Activated naive CD4-positive, alpha-beta T cell treated with anti-CD3 and anti-CD28 coated beads for 36 hours (primary cell): ENCODE measurements at regions of chr1 and their contacts with region 1.

Region 1: DNA sequence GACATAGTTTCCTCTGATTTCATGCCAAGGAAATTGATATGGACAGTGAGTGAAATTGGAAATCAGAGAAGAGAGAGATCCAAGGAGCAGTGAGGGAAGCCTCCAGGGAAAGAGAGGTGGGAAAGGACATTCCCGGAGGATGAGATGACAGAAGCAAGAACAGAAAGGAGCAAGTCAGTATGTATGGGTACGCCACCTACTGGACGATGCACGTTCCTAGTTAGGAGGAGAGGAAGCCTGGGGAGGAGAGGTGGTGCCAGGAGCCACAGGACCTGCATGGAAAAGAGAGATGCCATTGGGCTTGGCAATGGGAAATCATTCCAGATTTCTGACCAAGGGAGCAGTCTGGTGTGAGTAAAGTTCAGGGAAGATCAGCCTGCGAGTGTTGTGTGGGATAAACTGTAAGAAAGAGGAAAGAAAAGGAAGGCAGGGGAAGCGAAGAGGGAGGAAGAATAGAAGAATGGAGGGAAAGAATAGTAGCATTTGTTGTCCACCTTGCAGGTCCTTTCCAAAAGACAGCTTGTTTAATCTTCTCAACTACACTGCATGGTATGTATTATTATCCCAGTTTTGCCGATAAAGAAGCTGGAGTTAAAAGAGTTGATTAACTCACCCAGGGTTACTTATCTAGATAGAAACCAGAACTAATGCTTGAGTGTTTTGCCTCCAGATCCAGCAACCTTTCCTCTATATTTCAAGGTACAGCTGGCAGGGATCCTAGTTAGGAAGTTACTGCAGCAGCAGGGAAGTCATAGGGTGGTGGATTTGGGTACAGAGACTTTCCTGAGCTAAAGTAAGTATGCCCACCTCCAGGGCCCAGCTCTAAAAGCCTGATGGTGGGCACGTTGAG is 27.4 kb downstream of the C1orf116 start:
- DNase-seq: peak; percentile 62
- H3K4me3 Mint-ChIP-seq: no peak overlapping the region
- H3K27ac Mint-ChIP-seq: no peak overlapping the region
- H3K4me1 Mint-ChIP-seq: peaks cover 2% of the 10 kb centered on the region
- H3K27me3 Mint-ChIP-seq: peaks cover 2% of the 10 kb centered on the region

Region 2: DNA sequence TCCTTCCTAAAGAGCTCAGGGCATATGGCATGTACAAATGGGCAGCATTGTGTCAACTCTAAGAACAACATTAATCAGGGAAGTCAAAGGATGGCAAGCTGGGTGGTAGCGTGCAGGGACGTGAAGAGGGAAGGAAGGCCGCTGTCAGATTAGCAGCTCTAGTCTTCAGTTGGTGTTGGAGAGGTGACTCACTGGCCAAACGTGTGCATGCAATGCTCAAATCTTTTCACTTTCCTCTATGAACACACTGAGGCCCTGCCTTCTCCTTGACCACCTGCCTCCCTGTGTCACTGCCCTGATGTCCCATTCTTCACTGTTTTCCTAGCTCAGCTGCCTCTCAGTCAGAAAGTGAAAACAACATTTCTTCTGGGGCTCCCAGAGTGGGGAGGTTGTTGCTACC is 53.0 kb before region 1 on chr1:
- CTCF ChIA-PET with region 1: interaction called, 11 read pairs
- intact Hi-C with region 1: no loop called
- DNase-seq: no peak
- H3K4me3 Mint-ChIP-seq: no peak overlapping the region
- H3K27ac Mint-ChIP-seq: no peak overlapping the region
- H3K4me1 Mint-ChIP-seq: peaks cover 13% of the 10 kb centered on the region
- H3K27me3 Mint-ChIP-seq: no peaks in the 10 kb centered on the region

Region 3: GRCh38 chr1:206971029-206971655 is 34.1 kb before region 1 on chr1:
- CTCF ChIA-PET with region 1: interaction called, 14 read pairs
- intact Hi-C with region 1: no loop called
- DNase-seq: no peak
- H3K4me3 Mint-ChIP-seq: no peak overlapping the region
- H3K27ac Mint-ChIP-seq: no peak overlapping the region
- H3K4me1 Mint-ChIP-seq: peaks cover 18% of the 10 kb centered on the region
- H3K27me3 Mint-ChIP-seq: no peaks in the 10 kb centered on the region

Region 4: GRCh38 chr1:206992790-206993189 is 12.4 kb before region 1 on chr1:
- CTCF ChIA-PET with region 1: interaction called, 23 read pairs
- intact Hi-C with region 1: no loop called
- DNase-seq: no peak
- H3K4me3 Mint-ChIP-seq: no peak overlapping the region
- H3K27ac Mint-ChIP-seq: no peak overlapping the region
- H3K4me1 Mint-ChIP-seq: no peaks in the 10 kb centered on the region
- H3K27me3 Mint-ChIP-seq: peaks cover 4% of the 10 kb centered on the region

Region 5: DNA sequence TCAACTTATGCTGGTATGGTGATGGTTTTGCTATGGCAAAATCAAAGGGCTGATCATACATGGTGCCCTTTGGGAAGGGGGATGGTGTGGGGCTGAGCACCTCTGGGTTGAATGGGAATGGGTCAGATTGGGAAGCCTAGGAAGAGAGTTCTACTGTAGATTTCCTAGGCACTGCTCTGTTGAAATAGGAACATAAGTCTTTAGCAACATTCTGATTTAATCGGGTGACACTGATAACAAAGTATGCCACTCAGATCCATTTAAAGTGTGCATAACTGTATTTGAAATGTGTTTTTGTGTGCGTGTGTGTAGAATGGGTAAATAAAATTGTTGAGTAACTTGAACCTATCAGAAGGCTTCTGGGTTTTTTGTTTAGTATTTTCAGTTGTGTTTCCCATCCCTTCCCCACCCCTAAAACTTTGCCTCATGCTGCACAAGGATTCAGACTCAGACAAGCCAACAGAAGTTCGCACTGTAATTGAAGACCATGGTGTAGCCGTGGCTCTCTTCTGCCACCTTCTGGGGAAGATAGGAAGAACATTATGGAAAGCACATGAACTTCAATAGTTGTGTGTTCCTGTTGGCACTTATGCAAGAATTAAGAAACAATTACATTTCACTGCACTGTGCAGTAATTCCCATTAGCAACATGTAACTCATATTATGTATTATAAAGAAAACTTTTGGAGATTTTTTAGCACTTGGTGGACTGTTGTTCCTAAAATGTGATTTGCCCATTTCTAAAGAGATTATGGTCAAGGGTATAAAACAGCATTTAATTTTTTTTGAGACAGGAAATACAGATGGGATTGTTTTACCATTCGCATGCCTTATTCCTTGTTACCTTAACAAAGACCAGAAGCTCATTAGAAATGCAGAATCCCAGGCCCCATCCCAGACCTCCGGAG is 72.5 kb after region 1 on chr1:
- CTCF ChIA-PET with region 1: interaction called, 4 read pairs
- intact Hi-C with region 1: loop called (anchors 5 kb)
- DNase-seq: peak; percentile 82
- H3K4me3 Mint-ChIP-seq: no peak overlapping the region
- H3K27ac Mint-ChIP-seq: no peak overlapping the region
- H3K4me1 Mint-ChIP-seq: no peaks in the 10 kb centered on the region
- H3K27me3 Mint-ChIP-seq: no peaks in the 10 kb centered on the region

Region 6: DNA sequence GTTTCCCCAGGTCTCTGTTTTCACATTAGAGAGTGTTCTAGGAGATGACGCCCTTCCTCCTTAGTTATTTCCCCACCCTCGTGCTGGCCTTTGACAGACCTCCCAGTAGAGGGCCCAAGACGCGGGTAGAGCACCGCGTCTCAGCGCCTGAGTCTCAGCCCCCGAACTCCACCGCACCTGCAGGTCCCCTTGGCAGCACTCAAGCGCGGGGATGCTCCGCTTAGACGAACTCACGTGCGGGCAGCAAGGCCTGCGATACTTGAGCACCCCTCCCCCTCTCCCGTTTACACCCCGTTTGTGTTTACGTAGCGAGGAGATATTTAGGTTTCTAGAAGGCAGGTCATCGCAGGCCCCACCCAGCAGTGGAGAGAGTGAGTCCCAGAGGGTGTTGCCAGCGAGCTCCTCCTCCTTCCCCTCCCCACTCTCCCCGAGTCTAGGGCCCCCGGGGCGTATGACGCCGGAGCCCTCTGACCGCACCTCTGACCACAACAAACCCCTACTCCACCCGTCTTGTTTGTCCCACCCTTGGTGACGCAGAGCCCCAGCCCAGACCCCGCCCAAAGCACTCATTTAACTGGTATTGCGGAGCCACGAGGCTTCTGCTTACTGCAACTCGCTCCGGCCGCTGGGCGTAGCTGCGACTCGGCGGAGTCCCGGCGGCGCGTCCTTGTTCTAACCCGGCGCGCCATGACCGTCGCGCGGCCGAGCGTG is 316.0 kb after region 1 on chr1 and contains the start of gene CD55:
- CTCF ChIA-PET with region 1: no interaction called
- intact Hi-C with region 1: no loop called
- DNase-seq: peak; percentile 99
- H3K4me3 Mint-ChIP-seq: peak within 1 kb of the TSS; percentile 96
- H3K27ac Mint-ChIP-seq: peak within 1 kb of the TSS; percentile 98
- H3K4me1 Mint-ChIP-seq: peaks cover 34% of the 10 kb centered on the region
- H3K27me3 Mint-ChIP-seq: no peaks in the 10 kb centered on the region
- total RNA-seq, gene CD55: 62.1 to 66.0 TPM